Posterior cingulate gyrus (tissue), 11 donors: ENCODE measurements at regions of chr1 and their contacts with region 1.

Region 1: DNA sequence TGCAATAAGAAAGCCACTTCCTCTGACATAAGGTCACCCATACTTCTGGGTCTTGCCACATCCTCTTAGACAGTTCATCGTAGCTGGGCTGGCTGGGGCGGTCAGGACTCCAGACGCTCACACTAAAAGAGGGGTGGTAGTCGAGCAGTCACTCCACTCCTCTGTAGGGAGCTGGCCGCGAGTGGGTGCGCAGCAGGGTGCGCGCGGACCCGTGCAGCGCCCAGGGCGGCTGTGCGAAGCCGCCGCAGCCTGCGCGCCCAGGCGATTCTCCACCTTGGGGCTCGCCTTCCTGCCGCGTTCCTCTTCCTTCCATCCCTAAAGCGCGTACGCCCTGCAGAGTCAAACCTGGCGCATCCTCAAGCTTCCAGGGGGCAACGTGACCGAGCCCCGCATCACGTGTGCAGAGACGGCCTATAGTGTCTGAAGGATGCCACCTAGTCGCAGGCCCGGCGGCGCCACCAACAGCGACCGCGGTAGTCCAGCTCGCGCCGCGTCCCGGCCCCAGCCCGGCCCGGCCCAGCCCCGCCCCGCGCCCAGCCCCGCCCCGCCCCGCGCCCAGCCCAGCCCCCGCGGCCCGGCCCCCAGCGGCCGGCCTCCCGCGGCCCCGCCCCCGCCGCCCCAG is 360 bp upstream of the PRDX6 start:
- DNase-seq: peak; percentile 90 to 99 (median 95)

Region 2: DNA sequence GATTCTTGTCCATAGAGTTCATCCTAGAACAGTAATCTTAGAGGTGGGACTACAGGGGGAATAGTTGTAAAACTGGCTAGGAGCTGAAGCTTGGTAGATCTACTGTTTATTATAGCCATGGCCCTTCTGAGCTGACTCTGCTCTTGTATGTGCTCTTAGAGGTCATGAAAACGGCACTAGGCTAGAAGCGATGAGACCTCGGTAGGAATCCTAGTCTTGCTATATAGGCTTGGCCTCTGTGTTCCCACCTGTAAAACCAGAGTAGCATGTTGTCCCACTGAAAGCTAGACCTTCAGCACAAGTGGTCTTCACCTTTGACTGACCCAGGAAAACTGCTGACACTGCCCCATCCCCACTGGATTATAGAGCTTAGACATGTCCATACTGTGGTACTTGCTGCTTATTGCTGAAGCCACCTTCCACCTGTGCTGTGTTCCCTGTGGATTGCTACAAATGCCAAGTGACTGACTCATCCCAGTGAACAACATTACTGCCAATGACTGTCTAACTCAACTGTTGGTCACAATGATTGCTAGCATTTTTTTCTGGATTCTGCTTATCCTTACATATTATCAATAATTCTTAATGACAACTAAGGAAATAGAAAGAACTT is 1009.9 kb before region 1 on chr1:
- intact Hi-C with region 1: no loop called
- DNase-seq: no peak

Region 3: GRCh38 chr1:173377266-173377665 is 99.5 kb before region 1 on chr1:
- intact Hi-C with region 1: no loop called
- DNase-seq: no peak

Region 4: DNA sequence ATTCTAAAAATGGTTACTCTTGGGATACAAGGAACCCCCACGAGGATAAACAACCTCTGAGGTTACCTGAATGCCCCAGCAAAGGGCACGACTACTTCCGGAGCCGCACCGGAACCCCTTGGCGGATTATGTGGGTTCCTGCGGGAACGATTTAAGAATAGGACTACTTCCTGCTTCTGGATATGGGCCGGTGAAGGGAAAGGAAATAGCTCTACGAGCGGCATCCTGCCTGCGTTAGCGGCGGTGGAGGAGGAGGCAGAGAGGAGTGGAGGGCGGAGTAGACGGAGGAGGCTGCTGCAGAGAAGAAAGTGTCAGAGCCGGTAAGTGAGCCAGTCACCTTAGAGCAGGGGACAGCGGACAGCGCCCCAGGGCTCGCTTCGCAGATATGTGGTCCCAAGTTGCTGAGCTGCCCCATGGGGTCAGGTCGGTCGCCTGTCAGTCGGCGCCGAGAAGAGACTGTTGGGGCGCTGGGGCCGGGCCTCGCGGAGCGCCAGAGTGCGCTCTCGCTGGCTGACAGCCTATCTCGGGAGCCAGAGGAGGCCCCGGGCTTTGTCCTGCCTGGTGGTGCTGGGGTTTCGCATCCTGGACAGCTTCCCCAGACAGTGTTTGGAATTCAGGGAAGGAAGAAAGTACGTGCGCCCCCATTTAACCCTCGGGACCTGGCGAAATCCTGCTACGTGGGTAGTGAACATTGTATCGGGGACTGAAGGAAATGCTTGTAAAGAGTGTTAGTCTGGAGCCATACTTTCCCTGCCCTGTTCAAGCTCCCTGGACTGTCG is 238.2 kb after region 1 on chr1 and contains the start of gene KLHL20:
- intact Hi-C with region 1: loop called (anchors 5 kb)
- DNase-seq: peak; percentile 63 to 96 (median 78)

Region 5: GRCh38 chr1:174999216-174999925 is 1522.6 kb after region 1 on chr1:
- intact Hi-C with region 1: loop called (anchors 10 kb)
- DNase-seq: peak; percentile 94 to 100 (median 97)